Activated naive CD4-positive, alpha-beta T cell treated with anti-CD3 and anti-CD28 coated beads for 36 hours (primary cell): ENCODE measurements at regions of chr2 and their contacts with region 1.

Region 1: GRCh38 chr2:218852911-218853667 is 6.5 kb upstream of the WNT6 start:
- DNase-seq: peak; percentile 80
- H3K4me3 Mint-ChIP-seq: no peak overlapping the region
- H3K27ac Mint-ChIP-seq: no peak overlapping the region
- H3K4me1 Mint-ChIP-seq: no peaks in the 10 kb centered on the region
- H3K27me3 Mint-ChIP-seq: peaks cover 39% of the 10 kb centered on the region

Region 2: DNA sequence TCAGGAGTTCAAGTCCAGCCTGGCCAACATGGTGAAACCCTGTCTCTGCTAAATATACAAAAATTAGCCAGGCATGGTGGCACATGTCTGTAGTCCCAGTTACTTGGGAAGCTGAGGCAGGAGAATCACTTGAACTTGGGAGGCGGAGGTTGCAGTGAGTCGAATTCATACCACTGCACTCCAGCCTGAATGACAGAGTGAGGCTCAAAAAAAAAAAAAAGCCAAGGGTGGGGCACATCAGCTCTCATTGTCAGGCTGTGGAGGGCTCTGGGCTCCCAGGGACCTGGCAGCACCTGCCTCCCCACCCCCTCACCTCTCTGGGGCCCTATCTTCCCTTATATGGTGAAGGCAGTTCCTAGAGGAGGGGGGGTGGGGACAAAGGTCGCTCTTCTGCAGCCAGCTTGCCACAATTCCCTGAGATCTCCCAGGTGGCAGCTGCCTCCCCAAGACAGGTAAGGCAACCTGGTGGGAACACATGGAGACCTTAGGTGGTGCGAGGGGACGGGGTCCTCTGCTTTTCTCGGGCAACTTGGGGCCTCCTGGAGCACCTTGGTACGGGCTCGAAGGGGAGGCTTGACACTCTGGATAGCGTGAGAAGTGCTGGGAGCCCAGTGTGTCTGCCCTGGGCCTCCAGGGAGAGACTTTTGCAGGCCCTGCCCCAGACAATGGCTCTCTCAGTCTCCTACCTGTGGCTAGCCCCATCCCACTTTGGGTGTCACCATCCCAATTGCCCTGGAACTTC is 434.2 kb before region 1 on chr2 and contains the start of gene VIL1:
- CTCF ChIA-PET with region 1: no interaction called
- intact Hi-C with region 1: no loop called
- DNase-seq: no peak
- H3K4me3 Mint-ChIP-seq: no peak within 1 kb of the TSS
- H3K27ac Mint-ChIP-seq: no peak within 1 kb of the TSS
- H3K4me1 Mint-ChIP-seq: no peaks in the 10 kb centered on the region
- H3K27me3 Mint-ChIP-seq: no peaks in the 10 kb centered on the region
- total RNA-seq, gene VIL1: not detected

Region 3: GRCh38 chr2:218516614-218517013 is 336.5 kb before region 1 on chr2:
- CTCF ChIA-PET with region 1: no interaction called
- intact Hi-C with region 1: loop called (anchors 10 kb)
- DNase-seq: peak; percentile 6
- H3K4me3 Mint-ChIP-seq: no peak overlapping the region
- H3K27ac Mint-ChIP-seq: no peak overlapping the region
- H3K4me1 Mint-ChIP-seq: peaks cover 29% of the 10 kb centered on the region
- H3K27me3 Mint-ChIP-seq: no peaks in the 10 kb centered on the region

Region 4: DNA sequence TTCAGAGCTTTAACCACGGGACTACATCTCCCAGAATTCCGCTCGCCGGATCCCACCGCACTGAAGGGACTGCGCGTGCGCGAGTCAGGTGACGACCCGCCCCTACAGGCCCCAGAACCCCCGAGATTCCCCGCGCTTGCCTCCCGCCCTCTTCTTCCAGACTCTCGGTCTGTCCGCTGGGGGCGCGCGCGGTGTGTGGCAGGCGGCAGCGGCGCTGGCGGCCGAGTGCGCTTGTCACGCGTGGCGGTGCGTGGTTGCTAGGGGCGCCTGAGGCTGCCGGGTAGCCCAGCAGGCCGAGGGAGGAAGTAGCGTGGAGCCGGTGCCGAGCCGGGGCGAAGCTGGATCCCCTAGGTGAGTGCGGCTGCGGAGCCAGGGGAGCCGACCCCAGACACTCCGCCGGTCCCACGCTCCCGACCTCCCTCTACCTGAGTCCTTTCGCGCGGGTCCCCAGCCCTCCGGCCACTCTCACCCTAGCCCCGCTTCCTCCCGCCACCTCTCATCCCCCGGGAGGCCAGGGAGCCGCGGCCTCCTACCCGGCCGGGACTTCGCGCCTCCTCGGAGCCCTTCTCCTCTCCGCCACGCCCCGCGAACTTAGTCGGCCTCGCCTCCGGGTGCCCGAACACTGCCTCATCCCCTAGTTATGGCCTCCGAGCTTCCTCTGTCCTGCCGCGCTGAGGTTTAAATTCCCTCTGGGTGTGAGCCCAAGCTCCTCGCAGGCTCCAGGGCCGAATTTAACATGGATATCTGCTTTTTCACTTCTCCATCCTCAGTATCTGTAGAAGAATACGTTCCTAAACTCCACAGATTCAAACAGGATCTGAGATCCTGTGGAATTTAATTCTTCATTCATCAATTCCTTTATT is 142.2 kb before region 1 on chr2 and contains the start of gene TTLL4:
- CTCF ChIA-PET with region 1: interaction called, 11 read pairs
- intact Hi-C with region 1: no loop called
- DNase-seq: peak; percentile 99
- H3K4me3 Mint-ChIP-seq: peak within 1 kb of the TSS; percentile 98
- H3K27ac Mint-ChIP-seq: peak within 1 kb of the TSS; percentile 80
- H3K4me1 Mint-ChIP-seq: peaks cover 15% of the 10 kb centered on the region
- H3K27me3 Mint-ChIP-seq: peaks cover 3% of the 10 kb centered on the region
- total RNA-seq, gene TTLL4: 23.7 to 24.7 TPM

Region 5: DNA sequence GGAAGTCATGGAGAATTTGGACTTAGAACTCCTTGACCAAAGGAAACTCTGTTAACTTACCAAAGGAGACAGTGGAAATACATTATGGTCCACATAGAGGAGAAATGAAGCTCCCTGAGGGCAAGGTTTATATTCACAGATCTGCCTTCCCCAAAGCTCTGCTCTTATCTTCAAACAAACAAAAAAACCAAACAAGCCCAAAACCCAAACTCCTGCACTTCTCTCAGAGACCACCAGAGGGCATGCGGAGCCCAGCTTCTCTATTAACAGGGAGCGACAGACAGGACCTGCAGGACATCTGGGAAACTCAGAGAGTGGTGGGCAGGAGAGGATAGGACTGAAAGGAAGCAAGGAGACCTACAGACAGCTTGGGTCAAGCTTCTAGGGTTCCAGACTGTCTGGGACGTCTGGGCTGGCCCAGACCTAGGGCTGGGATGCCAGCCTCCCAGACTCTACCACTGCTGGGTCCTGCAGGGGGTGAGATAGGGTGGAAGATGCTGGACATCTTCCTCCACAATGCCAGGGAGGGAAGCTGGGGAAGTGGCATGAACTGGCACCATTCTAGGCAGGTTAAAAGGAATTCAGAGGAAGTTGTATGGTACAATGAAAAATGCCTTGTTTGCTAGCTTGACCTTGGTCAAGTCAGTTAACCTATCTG is 23.6 kb after region 1 on chr2:
- CTCF ChIA-PET with region 1: interaction called, 33 read pairs
- intact Hi-C with region 1: loop called (anchors 1 kb)
- DNase-seq: peak; percentile 86
- H3K4me3 Mint-ChIP-seq: no peak overlapping the region
- H3K27ac Mint-ChIP-seq: no peak overlapping the region
- H3K4me1 Mint-ChIP-seq: peaks cover 39% of the 10 kb centered on the region
- H3K27me3 Mint-ChIP-seq: peaks cover 41% of the 10 kb centered on the region

Region 6: GRCh38 chr2:218944759-218945404 is 91.8 kb after region 1 on chr2:
- CTCF ChIA-PET with region 1: no interaction called
- intact Hi-C with region 1: no loop called
- DNase-seq: no peak
- H3K4me3 Mint-ChIP-seq: no peak overlapping the region
- H3K27ac Mint-ChIP-seq: no peak overlapping the region
- H3K4me1 Mint-ChIP-seq: no peaks in the 10 kb centered on the region
- H3K27me3 Mint-ChIP-seq: peaks cover 15% of the 10 kb centered on the region

Region 7: GRCh38 chr2:219002395-219003266 is 149.5 kb after region 1 on chr2:
- CTCF ChIA-PET with region 1: no interaction called
- intact Hi-C with region 1: loop called (anchors 2 kb)
- DNase-seq: peak; percentile 76
- H3K4me3 Mint-ChIP-seq: peak overlapping the region; percentile 42
- H3K27ac Mint-ChIP-seq: no peak overlapping the region
- H3K4me1 Mint-ChIP-seq: peaks cover 9% of the 10 kb centered on the region
- H3K27me3 Mint-ChIP-seq: peaks cover 59% of the 10 kb centered on the region

Region 8: GRCh38 chr2:219155054-219155644 is 302.1 kb after region 1 on chr2:
- CTCF ChIA-PET with region 1: interaction called, 3 read pairs
- intact Hi-C with region 1: loop called (anchors 5 kb)
- DNase-seq: peak; percentile 40
- H3K4me3 Mint-ChIP-seq: no peak overlapping the region
- H3K27ac Mint-ChIP-seq: no peak overlapping the region
- H3K4me1 Mint-ChIP-seq: peaks cover 7% of the 10 kb centered on the region
- H3K27me3 Mint-ChIP-seq: no peaks in the 10 kb centered on the region

Region 9: GRCh38 chr2:220104871-220105351 is 1251.8 kb after region 1 on chr2:
- CTCF ChIA-PET with region 1: no interaction called
- intact Hi-C with region 1: no loop called
- DNase-seq: no peak
- H3K4me3 Mint-ChIP-seq: no peak overlapping the region
- H3K27ac Mint-ChIP-seq: no peak overlapping the region
- H3K4me1 Mint-ChIP-seq: no peaks in the 10 kb centered on the region
- H3K27me3 Mint-ChIP-seq: no peaks in the 10 kb centered on the region